Head of caudate nucleus (tissue), 42 donors: ENCODE measurements at regions of chr14 and their contacts with region 1.

Region 1: DNA sequence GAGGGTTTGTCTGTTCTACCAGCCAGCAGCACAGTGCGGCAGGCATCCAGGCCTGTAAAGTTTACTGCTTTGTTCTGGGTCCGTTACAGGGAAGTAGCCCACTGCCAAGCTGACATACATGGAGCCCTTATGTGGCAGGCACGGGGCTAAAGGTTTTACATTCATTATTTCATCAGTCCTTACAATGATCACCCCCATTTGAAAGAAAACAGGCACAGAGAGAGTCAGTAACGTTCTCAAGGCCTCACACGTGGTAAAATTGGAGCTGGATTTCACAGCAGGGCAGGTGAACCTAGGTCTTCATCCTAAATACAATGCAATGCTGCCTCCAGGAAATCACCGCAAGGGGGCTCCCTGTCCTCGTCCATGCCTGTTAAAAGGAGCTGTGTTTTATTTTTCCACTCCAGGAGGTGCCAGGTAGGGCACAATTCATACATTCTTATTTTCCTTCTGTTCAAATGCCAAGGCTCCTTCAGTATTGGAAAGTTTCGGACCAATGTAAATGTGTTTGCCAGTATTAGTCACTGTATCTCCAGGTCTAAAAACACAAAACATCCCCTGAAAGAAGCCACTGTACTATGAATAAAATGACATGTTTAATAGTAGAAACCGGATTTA is 172.2 kb upstream of the GZMB start:
- DNase-seq: peak; percentile 55 to 91 (median 78)

Region 2: DNA sequence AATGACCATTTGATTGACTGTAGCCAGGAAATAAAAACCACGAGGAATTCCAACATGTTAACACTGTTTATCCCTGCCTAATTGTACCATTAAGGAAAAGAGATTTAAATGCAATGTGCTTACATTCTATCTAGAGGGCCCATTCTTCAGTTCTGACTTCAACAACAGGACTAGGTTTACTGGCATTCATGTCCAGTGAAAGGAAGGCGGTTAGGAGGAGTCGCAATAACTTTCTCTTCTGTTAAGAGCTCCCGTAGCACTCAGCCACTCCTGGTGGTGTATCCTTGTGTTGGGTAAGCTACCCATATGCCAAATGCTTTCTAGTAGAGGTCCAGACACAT is 89.0 kb after region 1 on chr14:
- intact Hi-C with region 1: no loop called
- DNase-seq: no peak

Region 3: DNA sequence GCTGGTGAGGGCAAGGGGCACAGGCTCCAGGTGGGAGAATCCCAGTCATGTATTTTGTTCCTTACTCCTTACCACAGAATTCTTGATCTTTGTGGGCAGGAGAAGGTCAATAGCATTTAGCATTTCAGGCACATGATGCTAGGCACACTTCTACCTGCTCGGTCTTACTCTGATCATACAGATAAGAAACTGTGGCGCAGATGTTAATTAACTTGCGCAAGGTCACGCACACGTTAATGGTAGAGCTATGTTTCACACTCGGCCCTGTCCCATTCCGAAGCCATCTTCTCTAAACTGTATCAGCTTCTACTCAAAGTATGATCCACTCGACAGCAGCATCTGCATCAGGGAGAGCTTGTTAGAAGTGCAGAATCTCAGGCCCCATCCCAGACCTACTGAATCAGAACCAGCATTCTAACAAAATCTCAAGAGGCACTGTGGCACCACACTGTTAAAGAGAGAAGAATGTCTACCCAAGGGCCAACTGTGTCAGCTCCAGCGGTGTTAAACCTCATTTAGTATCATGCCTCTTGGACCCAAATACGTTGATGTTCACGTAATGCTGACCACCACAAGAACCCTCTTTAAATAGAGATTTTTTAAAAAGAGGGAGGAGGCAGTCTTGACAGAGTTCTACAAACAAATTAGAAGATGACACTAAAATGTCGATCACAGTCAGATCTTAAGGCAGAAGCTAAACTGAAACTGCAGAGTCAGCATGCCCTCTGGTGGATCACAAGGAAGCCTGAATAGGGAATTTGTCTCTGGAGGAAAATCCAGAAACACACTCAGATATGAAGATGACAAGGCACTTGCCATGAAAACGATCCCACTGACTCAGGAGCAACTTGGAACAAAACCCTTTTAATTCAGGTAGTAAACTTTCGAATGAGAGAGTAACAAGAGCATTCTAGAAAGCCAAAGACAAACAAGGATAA is 236.5 kb after region 1 on chr14:
- intact Hi-C with region 1: loop called (anchors 5 kb)
- DNase-seq: peak in 40 of 42 donors; percentile 24 to 89 (median 70)